ENCODE measurements at regions of chr6 and their contacts with region 1.

Region 1: GRCh38 chr6:27838058-27838944 is 73.9 kb downstream of the OR2B2 start:
- DNase-seq: peak; percentile 65 to 96 (median 93)
- ATAC-seq: peak; percentile 86
- H3K4me3 ChIP-seq: peak overlapping the region; percentile 87
- H3K4me3 Mint-ChIP-seq: no peak overlapping the region
- H3K27ac ChIP-seq: peak overlapping the region; percentile 93
- H3K27ac Mint-ChIP-seq: no peak overlapping the region
- H3K4me1 ChIP-seq: peaks cover 22 to 34% of the 10 kb centered on the region in 2 donors
- H3K4me1 Mint-ChIP-seq: peaks cover 7 to 39% (median 29%) of the 10 kb centered on the region in 7 donors
- H3K27me3 ChIP-seq: no peaks in the 10 kb centered on the region
- H3K27me3 Mint-ChIP-seq: peaks cover 0 to 14% (median 7%) of the 10 kb centered on the region in 5 donors

Region 2: DNA sequence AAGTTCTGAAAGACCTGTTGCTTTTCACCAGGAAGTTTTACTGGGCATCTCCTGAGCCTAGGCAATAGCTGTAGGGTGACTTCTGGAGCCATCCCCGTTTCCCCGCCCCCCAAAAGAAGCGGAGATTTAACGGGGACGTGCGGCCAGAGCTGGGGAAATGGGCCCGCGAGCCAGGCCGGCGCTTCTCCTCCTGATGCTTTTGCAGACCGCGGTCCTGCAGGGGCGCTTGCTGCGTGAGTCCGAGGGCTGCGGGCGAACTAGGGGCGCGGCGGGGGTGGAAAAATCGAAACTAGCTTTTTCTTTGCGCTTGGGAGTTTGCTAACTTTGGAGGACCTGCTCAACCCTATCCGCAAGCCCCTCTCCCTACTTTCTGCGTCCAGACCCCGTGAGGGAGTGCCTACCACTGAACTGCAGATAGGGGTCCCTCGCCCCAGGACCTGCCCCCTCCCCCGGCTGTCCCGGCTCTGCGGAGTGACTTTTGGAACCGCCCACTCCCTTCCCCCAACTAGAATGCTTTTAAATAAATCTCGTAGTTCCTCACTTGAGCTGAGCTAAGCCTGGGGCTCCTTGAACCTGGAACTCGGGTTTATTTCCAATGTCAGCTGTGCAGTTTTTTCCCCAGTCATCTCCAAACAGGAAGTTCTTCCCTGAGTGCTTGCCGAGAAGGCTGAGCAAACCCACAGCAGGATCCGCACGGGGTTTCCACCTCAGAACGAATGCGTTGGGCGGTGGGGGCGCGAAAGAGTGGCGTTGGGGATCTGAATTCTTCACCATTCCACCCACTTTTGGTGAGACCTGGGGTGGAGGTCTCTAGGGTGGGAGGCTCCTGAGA is 1750.8 kb before region 1 on chr6 and contains the start of gene HFE:
- CTCF ChIA-PET with region 1: interaction called, 4 read pairs
- POLR2A ChIA-PET with region 1: interaction called, 13 read pairs
- intact Hi-C with region 1: no loop called
- DNase-seq: peak in 8 of 9 donors; percentile 32 to 46 (median 38)
- ATAC-seq: peak; percentile 41
- H3K4me3 ChIP-seq: peak within 1 kb of the TSS; percentile 88
- H3K4me3 Mint-ChIP-seq: peak within 1 kb of the TSS; percentile 84 to 91 (median 88)
- H3K27ac ChIP-seq: peak within 1 kb of the TSS; percentile 72
- H3K27ac Mint-ChIP-seq: peak within 1 kb of the TSS; percentile 73 to 91 (median 84)
- H3K4me1 ChIP-seq: peaks cover 18 to 23% of the 10 kb centered on the region in 2 donors
- H3K4me1 Mint-ChIP-seq: peaks cover 31 to 51% (median 39%) of the 10 kb centered on the region in 7 donors
- H3K27me3 ChIP-seq: no peaks in the 10 kb centered on the region
- H3K27me3 Mint-ChIP-seq: peaks cover 0 to 5% (median 5%) of the 10 kb centered on the region in 5 donors
- total RNA-seq, gene HFE: 1.5 to 4.6 (median 2.5) TPM

Region 3: DNA sequence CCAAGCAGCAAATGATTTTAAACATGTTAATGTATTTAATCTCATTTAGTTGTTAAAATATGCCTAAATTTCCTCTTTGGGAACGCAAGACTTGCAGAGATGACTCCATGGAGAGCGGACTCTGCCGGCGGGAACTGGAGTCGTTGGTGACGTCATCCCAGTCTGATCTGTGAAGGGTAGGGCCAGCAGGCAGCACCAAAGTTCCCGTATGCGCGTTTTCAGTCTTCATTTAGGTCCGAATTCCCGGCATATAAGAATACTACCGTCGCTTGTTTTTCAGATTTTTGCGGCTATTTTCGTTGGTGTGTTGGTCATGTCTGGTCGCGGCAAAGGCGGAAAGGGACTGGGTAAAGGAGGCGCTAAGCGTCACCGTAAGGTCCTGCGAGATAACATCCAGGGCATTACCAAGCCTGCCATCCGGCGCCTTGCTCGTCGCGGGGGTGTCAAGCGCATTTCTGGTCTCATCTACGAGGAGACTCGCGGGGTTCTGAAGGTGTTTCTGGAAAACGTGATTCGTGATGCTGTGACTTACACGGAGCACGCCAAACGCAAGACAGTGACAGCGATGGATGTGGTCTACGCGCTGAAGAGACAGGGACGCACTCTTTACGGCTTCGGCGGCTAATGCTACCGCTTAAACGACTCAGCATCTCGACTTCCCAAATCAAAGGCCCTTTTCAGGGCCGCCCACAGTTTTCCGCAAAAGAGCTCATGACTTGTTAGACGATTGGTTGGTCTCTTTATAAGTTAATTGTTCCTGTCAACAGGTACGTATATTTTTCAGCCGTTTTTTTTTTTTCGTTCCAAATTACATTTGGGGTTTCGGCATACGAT is 1633.8 kb before region 1 on chr6:
- CTCF ChIA-PET with region 1: no interaction called
- POLR2A ChIA-PET with region 1: interaction called, 116 read pairs
- intact Hi-C with region 1: loop called in 1 of 2 experiments (anchors 10 kb)
- DNase-seq: peak; percentile 67 to 95 (median 89)
- ATAC-seq: peak; percentile 72
- H3K4me3 ChIP-seq: peak overlapping the region; percentile 77
- H3K4me3 Mint-ChIP-seq: no peak overlapping the region
- H3K27ac ChIP-seq: peak overlapping the region; percentile 90
- H3K27ac Mint-ChIP-seq: no peak overlapping the region
- H3K4me1 ChIP-seq: peaks cover 20 to 23% of the 10 kb centered on the region in 2 donors
- H3K4me1 Mint-ChIP-seq: peaks cover 9 to 36% (median 26%) of the 10 kb centered on the region in 7 donors
- H3K27me3 ChIP-seq: no peaks in the 10 kb centered on the region
- H3K27me3 Mint-ChIP-seq: peaks cover 0 to 5% (median 0%) of the 10 kb centered on the region in 5 donors

Region 4: DNA sequence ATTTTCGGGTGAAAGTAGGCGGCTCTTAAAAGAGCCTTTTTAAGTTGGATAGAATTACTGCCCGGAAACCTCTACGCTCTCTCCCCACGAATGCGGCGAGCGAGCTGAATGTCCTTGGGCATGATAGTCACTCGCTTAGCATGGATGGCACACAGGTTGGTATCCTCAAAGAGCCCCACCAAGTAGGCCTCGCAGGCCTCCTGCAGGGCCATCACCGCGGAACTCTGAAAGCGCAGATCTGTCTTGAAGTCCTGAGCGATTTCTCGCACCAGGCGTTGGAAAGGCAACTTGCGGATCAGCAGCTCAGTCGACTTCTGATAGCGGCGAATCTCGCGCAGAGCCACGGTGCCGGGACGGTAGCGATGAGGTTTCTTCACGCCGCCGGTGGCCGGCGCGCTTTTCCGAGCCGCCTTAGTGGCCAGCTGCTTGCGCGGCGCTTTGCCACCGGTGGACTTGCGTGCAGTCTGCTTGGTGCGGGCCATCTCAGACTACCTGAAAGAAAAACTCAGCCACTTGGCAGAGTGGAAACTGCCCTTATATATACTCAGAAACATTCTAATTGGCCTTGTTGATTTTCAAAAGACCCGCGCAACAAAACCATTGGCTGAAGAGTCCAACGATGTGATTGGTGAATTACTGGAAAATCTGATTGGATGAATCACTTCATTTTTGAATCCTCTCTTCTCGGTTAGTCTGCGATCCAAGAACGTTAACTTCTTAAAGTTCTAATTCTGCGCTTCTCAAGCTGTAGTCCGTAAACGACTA is 1567.2 kb before region 1 on chr6:
- CTCF ChIA-PET with region 1: no interaction called
- POLR2A ChIA-PET with region 1: interaction called, 20 read pairs
- intact Hi-C with region 1: loop called in 1 of 2 experiments (anchors 10 kb)
- DNase-seq: peak; percentile 50 to 89 (median 85)
- ATAC-seq: peak; percentile 24
- H3K4me3 ChIP-seq: peak overlapping the region; percentile 83
- H3K4me3 Mint-ChIP-seq: no peak overlapping the region
- H3K27ac ChIP-seq: peak overlapping the region; percentile 82
- H3K27ac Mint-ChIP-seq: peak overlapping the region in 2 of 9 donors; percentile 10 to 91
- H3K4me1 ChIP-seq: peaks cover 6 to 27% of the 10 kb centered on the region in 2 donors
- H3K4me1 Mint-ChIP-seq: peaks cover 0 to 34% (median 15%) of the 10 kb centered on the region in 7 donors
- H3K27me3 ChIP-seq: no peaks in the 10 kb centered on the region
- H3K27me3 Mint-ChIP-seq: no peaks in the 10 kb centered on the region

Region 5: GRCh38 chr6:26485112-26485780 is 1353.1 kb before region 1 on chr6:
- CTCF ChIA-PET with region 1: no interaction called
- POLR2A ChIA-PET with region 1: no interaction called
- intact Hi-C with region 1: no loop called
- DNase-seq: no peak
- ATAC-seq: no peak
- H3K4me3 ChIP-seq: no peak overlapping the region
- H3K4me3 Mint-ChIP-seq: no peak overlapping the region
- H3K27ac ChIP-seq: no peak overlapping the region
- H3K27ac Mint-ChIP-seq: peak overlapping the region in 1 of 9 donors; percentile 18
- H3K4me1 ChIP-seq: no peaks in the 10 kb centered on the region
- H3K4me1 Mint-ChIP-seq: peaks cover 0 to 7% (median 0%) of the 10 kb centered on the region in 7 donors
- H3K27me3 ChIP-seq: no peaks in the 10 kb centered on the region
- H3K27me3 Mint-ChIP-seq: peaks cover 0 to 8% (median 0%) of the 10 kb centered on the region in 5 donors

Region 6: GRCh38 chr6:27565821-27566766 is 272.2 kb before region 1 on chr6:
- CTCF ChIA-PET with region 1: no interaction called
- POLR2A ChIA-PET with region 1: no interaction called
- intact Hi-C with region 1: no loop called
- DNase-seq: no peak
- ATAC-seq: no peak
- H3K4me3 ChIP-seq: no peak overlapping the region
- H3K4me3 Mint-ChIP-seq: peak overlapping the region in 6 of 10 donors; percentile 5 to 55 (median 15)
- H3K27ac ChIP-seq: no peak overlapping the region
- H3K27ac Mint-ChIP-seq: no peak overlapping the region
- H3K4me1 ChIP-seq: no peaks in the 10 kb centered on the region
- H3K4me1 Mint-ChIP-seq: peaks cover 5 to 11% (median 8%) of the 10 kb centered on the region in 7 donors
- H3K27me3 ChIP-seq: peaks cover 9 to 38% of the 10 kb centered on the region in 2 donors
- H3K27me3 Mint-ChIP-seq: peaks cover 72 to 88% (median 76%) of the 10 kb centered on the region in 5 donors

Region 7: DNA sequence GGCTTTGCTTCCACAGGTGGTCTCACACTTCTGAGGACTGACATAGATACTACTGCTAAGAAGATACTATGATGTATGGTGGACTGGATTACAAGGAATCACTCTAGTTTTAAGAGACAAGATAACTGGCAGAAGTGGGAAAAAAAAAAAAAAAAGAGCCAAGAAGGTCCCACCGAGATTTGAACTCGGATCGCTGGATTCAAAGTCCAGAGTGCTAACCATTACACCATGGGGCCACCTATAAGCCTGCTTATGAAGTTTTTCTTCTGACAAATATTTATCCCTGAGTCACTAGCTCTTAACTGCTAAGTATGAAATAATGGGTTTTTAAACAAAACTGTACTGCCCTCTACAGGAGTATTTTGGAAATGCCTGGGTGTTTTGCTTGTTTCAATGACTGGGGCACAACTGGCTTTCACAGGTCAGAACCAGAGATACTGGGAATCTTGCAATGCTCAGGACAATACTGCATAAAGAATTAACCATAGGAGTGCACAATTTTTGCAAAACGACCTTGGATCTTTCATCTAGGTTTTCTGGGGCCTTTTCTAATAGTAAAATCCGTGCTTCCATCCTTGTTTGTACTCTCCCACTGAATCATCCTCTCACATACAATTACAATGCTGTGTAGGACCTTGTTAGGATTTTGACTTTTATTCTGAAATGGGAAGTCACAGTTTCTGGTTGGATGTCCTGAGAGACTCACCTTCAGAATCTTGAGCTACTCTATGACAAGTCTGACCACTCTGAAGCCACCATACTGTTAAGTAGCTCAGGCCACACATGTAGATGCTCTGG is 42.4 kb before region 1 on chr6:
- CTCF ChIA-PET with region 1: interaction called, 6 read pairs
- POLR2A ChIA-PET with region 1: interaction called, 11 read pairs
- intact Hi-C with region 1: no loop called
- DNase-seq: peak in 8 of 9 donors; percentile 36 to 83 (median 78)
- ATAC-seq: peak; percentile 86
- H3K4me3 ChIP-seq: no peak overlapping the region
- H3K4me3 Mint-ChIP-seq: peak overlapping the region in 2 of 10 donors; percentile 30 to 42
- H3K27ac ChIP-seq: no peak overlapping the region
- H3K27ac Mint-ChIP-seq: peak overlapping the region in 6 of 9 donors; percentile 11 to 86 (median 38)
- H3K4me1 ChIP-seq: peaks cover 14 to 24% of the 10 kb centered on the region in 2 donors
- H3K4me1 Mint-ChIP-seq: peaks cover 12 to 49% (median 22%) of the 10 kb centered on the region in 7 donors
- H3K27me3 ChIP-seq: no peaks in the 10 kb centered on the region
- H3K27me3 Mint-ChIP-seq: peaks cover 7 to 13% (median 12%) of the 10 kb centered on the region in 5 donors

Region 8: GRCh38 chr6:27871924-27872638 is 33.8 kb after region 1 on chr6:
- CTCF ChIA-PET with region 1: interaction called, 33 read pairs
- POLR2A ChIA-PET with region 1: interaction called, 1,351 read pairs
- intact Hi-C with region 1: loop called (anchors 1 kb)
- DNase-seq: peak; percentile 68 to 97 (median 94)
- ATAC-seq: peak; percentile 88
- H3K4me3 ChIP-seq: peak overlapping the region; percentile 69
- H3K4me3 Mint-ChIP-seq: peak overlapping the region; percentile 83 to 99 (median 94)
- H3K27ac ChIP-seq: peak overlapping the region; percentile 84
- H3K27ac Mint-ChIP-seq: peak overlapping the region; percentile 95 to 98 (median 97)
- H3K4me1 ChIP-seq: peaks cover under 1 to 19% of the 10 kb centered on the region in 2 donors
- H3K4me1 Mint-ChIP-seq: peaks cover 15 to 69% (median 42%) of the 10 kb centered on the region in 7 donors
- H3K27me3 ChIP-seq: no peaks in the 10 kb centered on the region
- H3K27me3 Mint-ChIP-seq: peaks cover 0 to 8% (median 0%) of the 10 kb centered on the region in 5 donors